Activated CD8-positive, alpha-beta memory T cell treated with anti-CD3 and anti-CD28 coated beads, Interleukin-2, amount 10 ng/mL, durations not matched to agents 7 days and 5 days (primary cell): ENCODE measurements at regions of chr10 and their contacts with region 1.

Region 1: GRCh38 chr10:45235798-45236231 is 79.6 kb downstream of the OR13A1 start:
- DNase-seq: no peak
- ATAC-seq: no peak
- H3K4me3 Mint-ChIP-seq: no peak overlapping the region
- H3K27ac Mint-ChIP-seq: no peak overlapping the region
- H3K4me1 Mint-ChIP-seq: peaks cover 16% of the 10 kb centered on the region
- H3K27me3 Mint-ChIP-seq: peaks cover 17% of the 10 kb centered on the region

Region 2: GRCh38 chr10:45220931-45221330 is 14.9 kb before region 1 on chr10:
- CTCF ChIA-PET with region 1: interaction called, 14 read pairs
- DNase-seq: no peak
- ATAC-seq: no peak
- H3K4me3 Mint-ChIP-seq: no peak overlapping the region
- H3K27ac Mint-ChIP-seq: no peak overlapping the region
- H3K4me1 Mint-ChIP-seq: no peaks in the 10 kb centered on the region
- H3K27me3 Mint-ChIP-seq: peaks cover 9% of the 10 kb centered on the region